Activated B cell treated with CpG ODN at 0.5 μM for 24 hours (primary cell): ENCODE measurements at regions of chr12 and their contacts with region 1.

Region 1: DNA sequence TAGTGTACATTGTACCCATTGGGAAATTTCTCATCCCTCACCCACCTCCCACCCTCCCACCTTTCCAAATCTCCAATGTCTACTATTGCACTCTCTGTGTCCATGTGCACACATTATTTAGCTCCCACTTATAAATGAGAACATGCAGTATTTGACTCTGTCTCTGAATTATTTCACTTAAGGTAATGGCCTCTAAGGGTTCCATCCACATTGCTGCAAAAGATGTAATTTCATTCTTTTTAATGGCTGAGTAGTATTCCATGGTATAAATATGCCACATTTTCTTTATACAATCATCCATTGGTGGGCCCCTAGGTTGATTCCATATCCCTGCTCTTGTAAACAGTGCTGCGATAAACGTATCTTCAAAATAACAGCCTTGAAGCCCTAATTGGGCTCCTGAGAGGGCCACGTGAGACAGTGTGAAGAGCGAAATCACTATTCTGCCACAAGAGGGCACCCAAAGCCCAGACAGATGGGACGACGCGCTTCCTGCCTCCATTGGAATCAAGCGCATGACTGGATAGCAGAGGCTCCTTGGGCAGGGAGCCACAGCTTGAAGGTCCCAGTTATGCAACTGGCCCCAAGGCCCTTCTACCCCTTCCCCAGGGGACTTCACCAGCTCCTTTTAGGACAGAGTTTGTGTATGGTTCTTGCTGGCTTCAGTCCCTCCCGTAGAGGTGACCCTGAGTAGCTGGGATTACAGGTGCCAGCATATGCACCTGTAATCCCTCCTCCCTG is 21.3 kb upstream of the CD27 start:
- DNase-seq: no peak
- ATAC-seq: peak; percentile 32
- H3K4me3 Mint-ChIP-seq: peak overlapping the region; percentile 19
- H3K27ac Mint-ChIP-seq: peak overlapping the region; percentile 80
- H3K4me1 Mint-ChIP-seq: peaks cover 40% of the 10 kb centered on the region
- H3K27me3 Mint-ChIP-seq: peaks cover 2% of the 10 kb centered on the region
- CTCF ChIP-seq: no peak

Region 2: GRCh38 chr12:6335451-6336078 is 87.9 kb before region 1 on chr12:
- CTCF ChIA-PET with region 1: no interaction called
- POLR2A ChIA-PET with region 1: no interaction called
- intact Hi-C with region 1: loop called (anchors 1 kb)
- DNase-seq: no peak
- ATAC-seq: peak; percentile 83
- H3K4me3 Mint-ChIP-seq: peak overlapping the region; percentile 29
- H3K27ac Mint-ChIP-seq: no peak overlapping the region
- H3K4me1 Mint-ChIP-seq: peaks cover 5% of the 10 kb centered on the region
- H3K27me3 Mint-ChIP-seq: peaks cover 44% of the 10 kb centered on the region
- CTCF ChIP-seq: no peak

Region 3: DNA sequence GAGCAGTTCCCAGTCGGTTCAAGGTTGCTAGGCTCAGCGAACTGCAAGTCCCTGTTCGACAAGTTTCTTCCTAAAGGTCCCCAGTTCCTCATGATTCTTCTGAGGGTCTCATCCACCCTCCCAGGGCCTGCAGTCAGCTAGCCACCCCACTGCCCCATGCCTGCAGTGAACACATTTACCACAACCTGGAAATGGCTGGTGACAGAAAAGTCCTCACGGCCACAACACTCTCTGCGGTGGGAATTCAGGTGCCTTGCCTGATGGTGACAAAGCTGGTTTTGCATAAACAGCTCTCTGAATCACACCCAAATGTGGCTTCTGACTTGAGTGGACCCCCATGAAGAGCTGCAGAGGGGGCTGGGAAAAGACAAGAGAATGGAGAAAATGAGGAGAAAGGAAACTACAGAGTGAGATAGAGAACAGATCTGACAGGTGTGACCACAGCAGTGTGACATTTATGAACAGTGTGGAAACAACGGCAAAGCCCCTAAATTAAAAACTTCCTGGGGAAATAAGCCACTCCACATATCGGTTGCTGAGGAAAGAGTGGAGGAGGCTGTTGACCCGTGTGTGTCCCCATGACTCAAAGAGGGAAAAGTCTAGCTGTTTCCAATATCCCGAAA is 20.0 kb after region 1 on chr12:
- CTCF ChIA-PET with region 1: interaction called, 13 read pairs
- POLR2A ChIA-PET with region 1: interaction called, 109 read pairs
- intact Hi-C with region 1: loop called (anchors 1 kb)
- DNase-seq: no peak
- ATAC-seq: peak; percentile 49
- H3K4me3 Mint-ChIP-seq: peak overlapping the region; percentile 84
- H3K27ac Mint-ChIP-seq: peak overlapping the region; percentile 92
- H3K4me1 Mint-ChIP-seq: peaks cover 69% of the 10 kb centered on the region
- H3K27me3 Mint-ChIP-seq: no peaks in the 10 kb centered on the region
- CTCF ChIP-seq: no peak

Region 4: DNA sequence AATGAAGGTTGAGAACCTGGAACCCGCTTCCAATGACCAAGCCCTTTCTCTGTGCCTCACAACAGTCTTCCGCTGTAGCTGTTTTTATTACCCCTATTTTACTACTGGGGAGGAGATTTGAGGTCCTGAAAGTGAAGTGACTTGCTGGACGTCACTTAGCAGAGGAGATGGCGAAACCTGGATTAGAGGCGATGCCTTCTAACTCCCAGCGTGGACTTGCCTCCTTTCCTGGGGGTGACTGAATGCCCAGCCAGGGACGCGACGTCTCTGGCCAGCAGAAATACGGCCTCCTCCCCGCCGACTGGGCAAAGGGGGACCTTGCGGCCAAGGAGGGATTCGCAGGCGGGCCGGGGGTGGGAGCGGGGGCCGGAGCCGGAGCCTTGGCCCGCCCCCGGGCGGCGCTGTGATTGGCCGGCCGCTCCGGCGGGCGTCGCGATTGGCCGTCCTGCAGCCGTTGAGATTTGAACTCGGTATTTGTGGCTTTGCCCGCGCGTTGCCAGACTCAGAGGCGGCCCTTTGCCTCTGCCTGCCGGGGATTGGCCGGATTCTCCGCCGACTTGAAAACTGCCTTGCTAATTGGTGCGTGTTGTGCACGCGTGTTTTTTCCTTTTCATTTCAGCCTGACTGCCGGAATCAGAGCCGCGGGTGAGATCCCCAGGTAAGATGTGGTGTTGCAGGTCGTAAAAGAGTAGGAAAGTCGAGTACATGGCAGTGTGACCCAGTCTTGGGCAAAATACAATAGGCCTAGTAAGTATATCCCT is 70.2 kb after region 1 on chr12 and contains the start of gene NCAPD2:
- CTCF ChIA-PET with region 1: interaction called, 5 read pairs
- POLR2A ChIA-PET with region 1: interaction called, 20 read pairs
- intact Hi-C with region 1: loop called (anchors 1 kb)
- DNase-seq: peak; percentile 85
- ATAC-seq: peak; percentile 85
- H3K4me3 Mint-ChIP-seq: peak within 1 kb of the TSS; percentile 97
- H3K27ac Mint-ChIP-seq: peak within 1 kb of the TSS; percentile 96
- H3K4me1 Mint-ChIP-seq: peaks cover 28% of the 10 kb centered on the region
- H3K27me3 Mint-ChIP-seq: no peaks in the 10 kb centered on the region
- CTCF ChIP-seq: no peak
- total RNA-seq, gene NCAPD2: 38.4 and 40.9 TPM in 2 replicates

Region 5: GRCh38 chr12:6540181-6540877 is 116.9 kb after region 1 on chr12:
- CTCF ChIA-PET with region 1: interaction called, 111 read pairs
- POLR2A ChIA-PET with region 1: interaction called, 71 read pairs
- intact Hi-C with region 1: loop called (anchors 1 kb)
- DNase-seq: no peak
- ATAC-seq: peak; percentile 45
- H3K4me3 Mint-ChIP-seq: peak overlapping the region; percentile 77
- H3K27ac Mint-ChIP-seq: peak overlapping the region; percentile 74
- H3K4me1 Mint-ChIP-seq: peaks cover 46% of the 10 kb centered on the region
- H3K27me3 Mint-ChIP-seq: no peaks in the 10 kb centered on the region
- CTCF ChIP-seq: no peak

Region 6: GRCh38 chr12:6778574-6779550 is 355.4 kb after region 1 on chr12:
- CTCF ChIA-PET with region 1: no interaction called
- POLR2A ChIA-PET with region 1: no interaction called
- intact Hi-C with region 1: no loop called
- DNase-seq: peak; percentile 77
- ATAC-seq: peak; percentile 98
- H3K4me3 Mint-ChIP-seq: peak overlapping the region; percentile 74
- H3K27ac Mint-ChIP-seq: peak overlapping the region; percentile 4
- H3K4me1 Mint-ChIP-seq: peaks cover 9% of the 10 kb centered on the region
- H3K27me3 Mint-ChIP-seq: peaks cover 42% of the 10 kb centered on the region
- CTCF ChIP-seq: peak; percentile 68

Region 7: DNA sequence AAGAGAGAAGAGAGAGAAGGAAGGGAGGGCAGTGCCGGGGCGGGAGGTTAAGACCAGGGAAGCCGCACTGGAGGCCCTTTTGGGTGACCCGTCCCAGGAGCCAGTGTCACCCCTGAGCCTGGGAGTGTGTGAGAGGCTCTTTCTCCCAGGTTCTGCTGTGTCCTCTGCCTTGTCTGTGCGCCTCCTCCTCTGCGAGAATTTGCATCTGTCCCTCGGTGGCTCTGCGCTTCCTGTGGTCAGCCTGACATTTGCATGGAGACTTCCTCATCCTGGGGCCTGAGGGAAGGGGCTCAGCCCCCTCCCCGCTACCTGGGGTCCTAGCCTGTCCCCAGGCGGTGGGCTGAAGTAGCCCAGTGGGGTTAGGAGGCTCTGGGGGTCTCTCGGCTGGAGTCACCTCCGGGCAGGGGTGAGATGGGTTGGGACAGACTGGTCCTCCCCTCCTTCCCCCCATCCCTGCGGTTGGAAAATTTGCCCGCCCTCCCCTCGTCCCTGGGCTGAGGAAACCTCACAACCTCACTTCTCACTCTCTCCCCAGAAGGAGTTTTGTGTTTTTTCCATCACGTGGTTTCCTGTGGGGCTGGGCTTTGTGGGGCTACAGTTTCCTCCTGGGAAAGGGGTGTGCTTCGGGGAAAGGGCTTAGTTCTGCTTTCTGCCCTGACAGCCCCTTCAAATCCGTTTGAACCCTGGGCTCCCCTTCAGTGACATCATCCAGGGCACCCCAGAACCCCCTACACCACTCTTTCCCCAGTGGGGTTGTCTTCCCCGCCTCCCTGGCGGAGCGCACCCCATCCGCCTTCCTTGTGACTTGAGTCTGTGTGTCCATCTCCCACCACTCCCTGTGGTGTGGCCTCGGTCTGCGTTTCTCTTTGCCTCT is 530.2 kb after region 1 on chr12:
- CTCF ChIA-PET with region 1: no interaction called
- POLR2A ChIA-PET with region 1: no interaction called
- intact Hi-C with region 1: loop called (anchors 10 kb)
- DNase-seq: peak; percentile 72
- ATAC-seq: peak; percentile 38
- H3K4me3 Mint-ChIP-seq: peak overlapping the region; percentile 99
- H3K27ac Mint-ChIP-seq: peak overlapping the region; percentile 96
- H3K4me1 Mint-ChIP-seq: peaks cover 85% of the 10 kb centered on the region
- H3K27me3 Mint-ChIP-seq: no peaks in the 10 kb centered on the region
- CTCF ChIP-seq: no peak